ENCODE measurements at regions of chr17 and their contacts with region 1.

Region 1: DNA sequence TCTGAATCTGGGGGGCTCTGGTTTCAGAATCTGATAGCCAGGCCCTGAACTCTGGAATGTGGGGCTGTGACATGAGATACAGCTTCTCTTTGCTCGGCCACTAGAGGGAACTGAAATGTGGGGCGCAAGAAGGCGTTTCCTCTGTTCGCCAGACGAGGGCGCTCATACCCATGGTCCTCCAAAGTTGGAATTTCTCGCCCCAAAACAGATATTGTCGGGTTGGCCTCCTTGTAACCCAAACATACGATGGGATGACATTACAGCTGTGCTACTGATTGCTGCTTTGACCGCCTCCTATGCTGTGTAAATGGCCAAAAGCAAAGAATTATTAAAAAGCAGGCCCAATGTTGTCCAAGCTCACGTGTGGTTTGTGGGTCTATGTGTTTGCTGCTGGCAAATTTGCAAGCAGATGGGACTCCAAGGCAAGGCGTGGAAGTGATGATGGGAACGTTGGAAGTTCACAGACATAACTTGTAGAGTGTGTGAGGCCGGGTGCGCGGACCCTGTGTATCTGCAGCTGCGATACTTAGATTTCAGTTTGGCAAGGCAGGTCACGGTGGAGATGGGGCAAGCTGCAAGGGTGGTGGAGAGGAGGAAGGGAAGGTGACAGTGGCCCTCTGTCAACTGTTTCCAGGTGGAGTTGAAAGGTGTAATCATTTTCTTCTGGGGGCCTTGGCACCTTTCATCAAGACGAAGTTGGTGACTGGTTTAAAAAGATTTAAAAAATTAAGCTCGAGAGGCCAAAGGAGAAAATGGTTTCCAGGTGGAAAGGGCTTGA is 13.0 kb upstream of the MSI2 start:
- DNase-seq: peak; percentile 87
- ATAC-seq: peak; percentile 83
- H3K4me3 Mint-ChIP-seq: no peak overlapping the region
- H3K27ac Mint-ChIP-seq: peak overlapping the region; percentile 29
- H3K4me1 Mint-ChIP-seq: peaks cover 4% of the 10 kb centered on the region
- H3K27me3 Mint-ChIP-seq: peaks cover 2% of the 10 kb centered on the region

Region 2: DNA sequence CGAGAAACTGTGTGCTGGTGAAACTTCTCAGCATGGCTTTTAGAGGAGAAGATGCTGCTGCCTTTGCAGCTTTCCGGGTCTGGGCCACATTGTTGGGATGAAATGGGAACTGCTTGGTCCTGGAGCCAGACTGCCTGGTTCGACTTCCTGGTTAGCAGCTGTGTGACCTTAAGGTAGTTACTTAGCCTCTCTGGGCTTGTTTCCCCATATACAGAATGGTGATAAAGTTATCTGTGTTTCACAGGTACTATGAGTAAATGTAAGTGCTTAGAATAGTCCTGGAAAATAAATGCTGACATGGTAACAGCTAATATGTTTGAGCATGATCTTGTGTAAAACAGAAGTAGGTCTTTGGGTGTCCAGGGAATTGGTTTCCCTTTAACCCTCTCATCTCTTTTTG is 132.0 kb before region 1 on chr17:
- CTCF ChIA-PET with region 1: no interaction called
- POLR2A ChIA-PET with region 1: no interaction called
- intact Hi-C with region 1: no loop called
- DNase-seq: no peak
- ATAC-seq: no peak
- H3K4me3 Mint-ChIP-seq: no peak overlapping the region
- H3K27ac Mint-ChIP-seq: no peak overlapping the region
- H3K4me1 Mint-ChIP-seq: no peaks in the 10 kb centered on the region
- H3K27me3 Mint-ChIP-seq: no peaks in the 10 kb centered on the region

Region 3: DNA sequence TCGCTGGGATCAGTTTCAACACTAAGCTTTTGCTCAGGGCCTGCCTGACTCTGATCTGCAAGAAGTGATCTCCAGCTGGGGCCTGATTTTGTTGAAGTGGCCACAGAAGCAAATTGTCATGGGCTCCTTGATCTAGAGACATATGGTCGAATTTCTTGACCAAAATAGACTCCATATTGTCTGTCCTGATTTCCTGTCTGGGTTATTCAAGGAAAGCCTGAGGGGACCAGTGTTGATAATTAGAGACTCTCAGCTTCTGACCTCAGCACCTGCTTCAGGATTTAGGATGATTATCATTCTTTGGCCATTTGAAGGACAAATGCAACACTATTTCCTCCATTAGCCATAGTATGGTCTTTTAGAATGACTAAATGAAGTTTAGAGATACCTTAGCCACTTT is 35.9 kb before region 1 on chr17:
- CTCF ChIA-PET with region 1: interaction called, 12 read pairs
- POLR2A ChIA-PET with region 1: no interaction called
- intact Hi-C with region 1: no loop called
- DNase-seq: no peak
- ATAC-seq: no peak
- H3K4me3 Mint-ChIP-seq: no peak overlapping the region
- H3K27ac Mint-ChIP-seq: no peak overlapping the region
- H3K4me1 Mint-ChIP-seq: no peaks in the 10 kb centered on the region
- H3K27me3 Mint-ChIP-seq: no peaks in the 10 kb centered on the region

Region 4: GRCh38 chr17:57261084-57261461 is 17.7 kb after region 1 on chr17:
- CTCF ChIA-PET with region 1: interaction called, 27 read pairs
- POLR2A ChIA-PET with region 1: no interaction called
- intact Hi-C with region 1: no loop called
- DNase-seq: peak; percentile 38
- ATAC-seq: no peak
- H3K4me3 Mint-ChIP-seq: peak overlapping the region; percentile 8
- H3K27ac Mint-ChIP-seq: peak overlapping the region; percentile 14
- H3K4me1 Mint-ChIP-seq: peaks cover 54% of the 10 kb centered on the region
- H3K27me3 Mint-ChIP-seq: no peaks in the 10 kb centered on the region

Region 5: DNA sequence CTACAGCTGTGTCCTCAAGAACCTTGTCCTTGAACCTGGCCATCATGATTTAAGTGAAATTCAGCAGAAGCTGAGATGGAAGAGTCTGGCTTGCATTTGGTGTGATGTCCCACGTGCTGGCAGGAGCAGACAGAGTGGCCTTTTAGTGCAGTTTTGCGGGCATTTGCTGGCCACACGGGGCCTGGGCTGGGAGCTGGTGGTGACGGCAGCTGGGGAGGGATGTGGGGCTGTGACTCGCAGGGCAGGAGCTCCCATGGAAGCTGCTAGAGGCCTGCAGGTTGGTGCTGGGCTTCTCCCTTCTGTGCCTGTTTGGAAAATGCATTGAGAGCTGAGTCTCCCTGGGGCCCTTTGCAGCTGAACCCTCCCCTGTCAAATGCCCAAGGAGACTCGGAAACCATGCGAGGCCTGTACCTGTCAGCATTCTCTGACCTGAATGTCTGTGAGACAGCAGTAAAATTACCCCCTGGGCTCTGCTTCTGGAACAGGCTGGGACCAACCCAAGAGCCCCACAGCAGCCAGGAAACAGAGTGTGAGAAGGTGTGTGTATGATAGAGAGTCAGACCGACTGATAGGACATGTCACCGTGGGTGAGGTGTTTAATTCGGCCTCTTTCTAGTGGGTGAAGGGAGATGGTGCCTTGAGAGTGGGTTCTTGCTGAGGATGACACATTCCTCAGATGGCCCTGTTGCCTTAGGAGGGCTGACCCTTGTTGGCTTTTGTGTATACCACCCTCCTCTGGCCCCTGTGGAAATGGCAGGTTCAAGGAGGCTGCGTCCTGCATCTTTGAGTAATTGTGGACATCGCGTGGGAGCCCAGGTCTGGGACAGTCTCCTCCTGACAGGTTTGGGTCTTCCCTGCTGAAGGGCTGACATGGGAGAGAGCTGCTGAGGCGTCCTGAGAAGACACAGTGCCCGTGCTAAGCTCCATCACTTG is 158.5 kb after region 1 on chr17:
- CTCF ChIA-PET with region 1: interaction called, 30 read pairs
- POLR2A ChIA-PET with region 1: no interaction called
- intact Hi-C with region 1: loop called in 1 of 2 experiments (anchors 2 kb)
- DNase-seq: no peak
- ATAC-seq: no peak
- H3K4me3 Mint-ChIP-seq: no peak overlapping the region
- H3K27ac Mint-ChIP-seq: no peak overlapping the region
- H3K4me1 Mint-ChIP-seq: peaks cover 14% of the 10 kb centered on the region
- H3K27me3 Mint-ChIP-seq: no peaks in the 10 kb centered on the region

Region 6: GRCh38 chr17:57499648-57500049 is 256.3 kb after region 1 on chr17:
- CTCF ChIA-PET with region 1: interaction called, 12 read pairs
- POLR2A ChIA-PET with region 1: no interaction called
- intact Hi-C with region 1: no loop called
- DNase-seq: no peak
- ATAC-seq: peak; percentile 47
- H3K4me3 Mint-ChIP-seq: no peak overlapping the region
- H3K27ac Mint-ChIP-seq: peak overlapping the region; percentile 21
- H3K4me1 Mint-ChIP-seq: peaks cover 25% of the 10 kb centered on the region
- H3K27me3 Mint-ChIP-seq: no peaks in the 10 kb centered on the region

Region 7: GRCh38 chr17:57622683-57623433 is 379.5 kb after region 1 on chr17:
- CTCF ChIA-PET with region 1: interaction called, 11 read pairs
- POLR2A ChIA-PET with region 1: no interaction called
- intact Hi-C with region 1: no loop called
- DNase-seq: peak; percentile 55
- ATAC-seq: peak; percentile 68
- H3K4me3 Mint-ChIP-seq: no peak overlapping the region
- H3K27ac Mint-ChIP-seq: peak overlapping the region; percentile 64
- H3K4me1 Mint-ChIP-seq: peaks cover 18% of the 10 kb centered on the region
- H3K27me3 Mint-ChIP-seq: no peaks in the 10 kb centered on the region

Region 8: GRCh38 chr17:57783106-57783742 is 539.9 kb after region 1 on chr17:
- CTCF ChIA-PET with region 1: interaction called, 14 read pairs
- POLR2A ChIA-PET with region 1: no interaction called
- intact Hi-C with region 1: no loop called
- DNase-seq: peak; percentile 91
- ATAC-seq: peak; percentile 97
- H3K4me3 Mint-ChIP-seq: no peak overlapping the region
- H3K27ac Mint-ChIP-seq: no peak overlapping the region
- H3K4me1 Mint-ChIP-seq: peaks cover 2% of the 10 kb centered on the region
- H3K27me3 Mint-ChIP-seq: peaks cover 21% of the 10 kb centered on the region